Left cardiac atrium (tissue), 4 donors: ENCODE measurements at regions of chr3 and their contacts with region 1.

Region 1: GRCh38 chr3:172673210-172673679 is 37.6 kb downstream of the NCEH1 start:
- DNase-seq: peak; percentile 54
- ATAC-seq: peak in 1 of 2 donors; percentile 63

Region 2: DNA sequence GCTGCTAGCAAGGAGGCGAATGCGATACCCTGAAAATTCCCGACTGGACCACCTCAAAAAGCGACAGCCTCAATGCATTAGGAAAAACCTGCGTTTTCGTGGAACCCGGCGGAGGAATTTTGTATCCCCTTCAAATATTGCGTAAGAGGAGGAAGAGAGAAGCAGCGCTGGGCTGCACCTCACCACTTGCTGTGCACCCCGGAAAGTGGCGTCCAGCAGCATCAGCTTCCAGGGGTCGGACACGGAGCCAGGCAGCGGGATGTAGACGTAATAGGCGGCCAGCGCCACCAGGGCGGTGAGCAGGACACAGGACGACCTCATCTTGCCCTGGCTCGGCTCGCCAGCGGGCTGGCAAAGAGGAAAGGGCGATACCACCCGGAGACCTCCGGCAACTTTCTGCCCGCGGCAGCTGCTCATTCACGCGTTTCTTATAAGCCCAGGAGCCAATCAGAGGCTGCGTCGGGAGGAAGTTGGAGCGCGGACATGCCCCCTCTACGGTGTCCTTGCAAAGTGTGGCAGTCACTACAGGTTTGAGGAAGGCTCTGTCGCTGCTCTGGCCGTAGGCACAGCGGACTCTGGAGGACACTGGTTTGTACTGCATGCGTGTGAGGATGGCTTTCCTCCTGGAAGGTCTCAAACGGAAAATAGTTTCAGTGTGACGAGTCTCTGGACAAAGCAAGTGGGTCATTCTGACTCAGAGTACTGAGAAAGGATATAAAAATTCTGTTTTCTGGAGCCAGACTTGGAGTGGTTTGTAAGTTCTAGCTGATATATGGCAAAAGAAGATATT is 37.6 kb after region 1 on chr3 and contains the start of gene NCEH1:
- intact Hi-C with region 1: loop called in 1 of 2 experiments (anchors 5 kb)
- DNase-seq: peak; percentile 92
- ATAC-seq: peak; percentile 98
- total RNA-seq, gene NCEH1: 21.4 to 25.5 TPM

Region 3: DNA sequence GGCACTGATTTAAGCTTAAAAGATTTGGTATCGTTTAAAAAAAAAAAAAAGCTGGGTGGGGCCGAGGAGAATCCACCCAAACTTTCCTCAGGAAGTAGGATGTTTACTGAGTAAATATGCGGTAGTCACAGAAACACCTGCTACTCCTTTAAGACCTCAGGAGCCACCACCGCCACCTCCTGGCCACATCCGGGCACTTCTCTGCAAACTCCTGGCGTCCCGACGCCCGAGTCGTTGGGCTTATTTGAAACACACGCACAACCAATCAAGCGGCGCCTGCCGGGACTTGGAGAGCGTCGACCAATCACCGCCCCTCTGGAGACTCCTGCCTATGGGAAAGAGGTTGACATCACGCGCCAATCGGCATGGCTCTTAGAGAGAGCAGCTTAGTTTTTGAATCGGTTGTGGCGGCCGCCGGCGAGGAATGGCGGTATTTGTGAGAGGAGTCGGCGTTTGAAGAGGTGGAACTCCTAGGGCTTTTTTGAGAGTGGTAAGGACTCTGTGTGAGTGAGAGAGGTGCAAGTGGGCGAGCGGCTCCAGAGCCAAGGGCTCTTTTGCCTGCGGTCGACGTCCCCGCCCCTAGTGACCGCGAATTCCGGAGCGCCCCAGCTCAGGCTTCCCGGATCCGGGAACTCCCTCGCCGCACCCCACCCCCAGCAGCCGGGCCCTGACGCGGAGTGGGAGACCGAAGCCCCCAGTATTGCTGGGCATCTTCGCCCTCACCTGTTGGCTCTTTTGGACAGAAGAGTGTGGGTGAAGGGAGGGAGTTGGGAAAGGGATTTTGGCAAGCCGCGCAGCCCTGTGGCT is 77.3 kb after region 1 on chr3 and contains the start of gene ECT2:
- intact Hi-C with region 1: loop called in 1 of 2 experiments (anchors 1 kb)
- DNase-seq: peak; percentile 100
- ATAC-seq: peak; percentile 98 to 99
- total RNA-seq, gene ECT2: 5.6 to 5.8 TPM

Region 4: DNA sequence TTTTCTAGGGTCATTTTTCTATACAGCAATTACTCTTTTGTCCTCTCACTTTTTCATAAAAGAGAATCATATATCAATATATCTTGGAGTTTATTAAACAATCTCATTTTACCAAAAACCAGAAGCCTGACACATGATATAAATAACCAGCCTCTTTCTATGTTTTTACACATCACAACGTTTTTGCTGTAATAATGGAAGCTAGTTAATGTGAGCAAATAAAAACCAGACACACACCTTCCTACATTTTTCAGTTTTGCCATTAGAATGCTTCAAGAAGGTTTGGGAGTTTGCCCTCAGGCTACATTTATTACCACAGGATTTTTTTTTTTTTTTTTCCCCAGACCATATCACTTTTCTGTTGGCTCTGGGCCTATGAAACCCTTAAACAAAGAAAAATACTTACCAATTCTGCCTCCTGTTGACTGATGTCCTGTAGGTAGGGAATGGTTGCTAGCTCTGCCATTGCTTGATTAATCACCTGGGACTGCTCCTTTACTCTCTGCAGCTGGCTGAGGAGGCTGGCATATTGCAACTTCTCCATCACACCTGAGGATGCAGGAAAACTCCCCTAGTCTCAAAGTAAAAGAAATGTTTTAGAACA is 242.8 kb after region 1 on chr3:
- intact Hi-C with region 1: no loop called
- DNase-seq: no peak
- ATAC-seq: no peak

Region 5: GRCh38 chr3:173473237-173473636 is 800.0 kb after region 1 on chr3:
- intact Hi-C with region 1: no loop called
- DNase-seq: no peak
- ATAC-seq: no peak